Naive thymus-derived CD4-positive, alpha-beta T cell (primary cell): ENCODE measurements at regions of chr1 and their contacts with region 1.

Region 1: DNA sequence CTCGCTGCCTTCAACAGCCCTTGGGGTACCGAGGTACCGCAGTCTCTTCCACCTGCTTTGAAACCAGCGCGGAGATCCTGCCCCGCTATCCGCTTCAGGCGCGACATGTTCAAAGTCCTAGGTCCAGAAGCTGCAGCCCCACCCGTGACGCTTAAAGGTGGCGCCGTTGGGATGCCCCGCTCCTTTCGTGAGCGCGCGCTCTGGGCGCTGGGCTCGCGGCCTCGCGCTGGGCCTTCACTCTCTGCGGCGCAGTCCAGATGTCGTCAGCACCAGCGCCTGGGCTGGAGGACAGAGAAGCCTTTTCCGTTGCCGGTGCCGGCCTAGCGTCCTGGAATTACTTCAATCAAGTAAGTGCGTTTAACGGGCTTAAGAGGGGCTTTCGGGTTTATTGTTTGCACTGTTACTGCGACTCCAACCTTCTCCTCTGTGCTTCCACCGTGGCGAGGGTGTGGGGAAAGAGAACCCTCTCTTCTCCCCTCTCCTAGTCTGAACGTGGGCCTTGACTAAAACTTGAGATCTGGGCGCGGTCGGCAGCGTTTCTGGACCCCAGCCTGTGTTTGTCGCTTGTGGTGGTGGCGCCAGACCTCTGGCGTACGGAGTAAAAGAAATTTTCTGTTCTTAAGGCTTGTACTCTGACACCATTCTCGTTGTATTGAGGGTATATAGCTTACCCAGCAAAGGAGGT is at the start of gene LRRC40:
- DNase-seq: peak; percentile 92 to 98 (median 95)
- ATAC-seq: peak; percentile 99
- H3K4me3 ChIP-seq: peak within 1 kb of the TSS; percentile 85
- H3K4me3 Mint-ChIP-seq: peak within 1 kb of the TSS; percentile 87 to 99 (median 98)
- H3K27ac ChIP-seq: peak within 1 kb of the TSS; percentile 96
- H3K27ac Mint-ChIP-seq: peak within 1 kb of the TSS; percentile 95 to 100 (median 99)
- H3K4me1 ChIP-seq: peaks cover 21 to 22% of the 10 kb centered on the region in 2 donors
- H3K4me1 Mint-ChIP-seq: peaks cover 44 to 92% (median 78%) of the 10 kb centered on the region in 7 donors
- H3K27me3 ChIP-seq: no peaks in the 10 kb centered on the region
- H3K27me3 Mint-ChIP-seq: no peaks in the 10 kb centered on the region
- total RNA-seq, gene LRRC40: 10.3 to 19.2 (median 12.1) TPM

Region 2: DNA sequence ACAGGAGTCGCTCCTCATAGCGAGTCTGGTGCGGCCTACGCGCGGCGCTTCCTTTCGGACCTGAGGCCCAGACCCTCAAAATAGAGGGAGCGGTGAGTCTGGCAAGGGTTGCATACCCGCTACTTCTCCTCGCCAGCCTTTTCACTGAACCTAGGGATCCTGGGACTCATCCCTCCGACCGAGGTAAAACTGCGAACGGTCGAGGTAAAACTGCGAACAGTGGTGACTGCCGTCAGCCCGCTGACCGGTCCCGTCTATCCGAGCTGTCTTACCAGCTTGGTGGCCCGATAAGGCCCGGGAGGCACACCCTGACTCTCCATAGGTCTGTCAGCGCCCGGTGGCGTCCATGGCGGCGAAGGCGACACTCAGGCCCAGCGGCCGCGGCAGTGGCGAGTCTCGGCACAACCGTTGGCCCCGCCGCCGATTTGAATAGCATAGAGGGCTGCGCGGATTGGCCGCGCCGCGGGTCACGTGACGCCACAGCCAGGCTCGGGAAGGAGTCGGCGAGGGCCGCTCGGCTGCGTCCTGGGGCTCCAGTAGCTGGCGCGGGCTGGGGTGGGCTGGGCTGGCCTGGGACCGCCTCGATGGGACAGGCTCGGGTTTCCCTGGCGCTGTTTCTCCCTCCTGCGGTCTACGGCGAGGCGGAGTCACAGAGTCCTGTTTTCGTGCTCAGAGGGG is 1708.8 kb before region 1 on chr1 and contains the start of gene DEPDC1:
- CTCF ChIA-PET with region 1: no interaction called
- POLR2A ChIA-PET with region 1: no interaction called
- intact Hi-C with region 1: loop called in 1 of 2 experiments (anchors 10 kb)
- DNase-seq: peak; percentile 10 to 91 (median 42)
- ATAC-seq: peak; percentile 94
- H3K4me3 ChIP-seq: peak within 1 kb of the TSS; percentile 70
- H3K4me3 Mint-ChIP-seq: peak within 1 kb of the TSS; percentile 68 to 94 (median 81)
- H3K27ac ChIP-seq: no peak within 1 kb of the TSS
- H3K27ac Mint-ChIP-seq: peak within 1 kb of the TSS in 1 of 9 donors; percentile 87
- H3K4me1 ChIP-seq: peaks cover 0 to 5% of the 10 kb centered on the region in 2 donors
- H3K4me1 Mint-ChIP-seq: peaks cover 0 to 35% (median 13%) of the 10 kb centered on the region in 7 donors
- H3K27me3 ChIP-seq: no peaks in the 10 kb centered on the region
- H3K27me3 Mint-ChIP-seq: peaks cover 20 to 39% (median 25%) of the 10 kb centered on the region in 5 donors
- total RNA-seq, gene DEPDC1: 0.13 to 12.6 (median 0.24) TPM in 3 of 5 experiments, not detected in the others

Region 3: GRCh38 chr1:70134148-70134547 is 71.4 kb before region 1 on chr1:
- CTCF ChIA-PET with region 1: no interaction called
- POLR2A ChIA-PET with region 1: no interaction called
- intact Hi-C with region 1: loop called in 1 of 2 experiments (anchors 1 kb)
- DNase-seq: no peak
- ATAC-seq: no peak
- H3K4me3 ChIP-seq: no peak overlapping the region
- H3K4me3 Mint-ChIP-seq: no peak overlapping the region
- H3K27ac ChIP-seq: no peak overlapping the region
- H3K27ac Mint-ChIP-seq: no peak overlapping the region
- H3K4me1 ChIP-seq: no peaks in the 10 kb centered on the region
- H3K4me1 Mint-ChIP-seq: peaks cover 0 to 4% (median 0%) of the 10 kb centered on the region in 7 donors
- H3K27me3 ChIP-seq: no peaks in the 10 kb centered on the region
- H3K27me3 Mint-ChIP-seq: peaks cover 0 to 25% (median 9%) of the 10 kb centered on the region in 5 donors

Region 4: GRCh38 chr1:70221241-70222121 is 15.9 kb after region 1 on chr1 and contains the start of gene SRSF11:
- CTCF ChIA-PET with region 1: no interaction called
- POLR2A ChIA-PET with region 1: interaction called, 108 read pairs
- intact Hi-C with region 1: loop called (anchors 1 kb)
- DNase-seq: peak; percentile 93 to 98 (median 96)
- ATAC-seq: peak; percentile 98
- H3K4me3 ChIP-seq: peak within 1 kb of the TSS; percentile 85
- H3K4me3 Mint-ChIP-seq: peak within 1 kb of the TSS; percentile 86 to 95 (median 91)
- H3K27ac ChIP-seq: peak within 1 kb of the TSS; percentile 95
- H3K27ac Mint-ChIP-seq: peak within 1 kb of the TSS; percentile 92 to 99 (median 96)
- H3K4me1 ChIP-seq: peaks cover 22 to 32% of the 10 kb centered on the region in 2 donors
- H3K4me1 Mint-ChIP-seq: peaks cover 29 to 65% (median 54%) of the 10 kb centered on the region in 7 donors
- H3K27me3 ChIP-seq: no peaks in the 10 kb centered on the region
- H3K27me3 Mint-ChIP-seq: peaks cover 0 to 2% (median 0%) of the 10 kb centered on the region in 5 donors
- total RNA-seq, gene SRSF11: 190 to 413 (median 372) TPM

Region 5: DNA sequence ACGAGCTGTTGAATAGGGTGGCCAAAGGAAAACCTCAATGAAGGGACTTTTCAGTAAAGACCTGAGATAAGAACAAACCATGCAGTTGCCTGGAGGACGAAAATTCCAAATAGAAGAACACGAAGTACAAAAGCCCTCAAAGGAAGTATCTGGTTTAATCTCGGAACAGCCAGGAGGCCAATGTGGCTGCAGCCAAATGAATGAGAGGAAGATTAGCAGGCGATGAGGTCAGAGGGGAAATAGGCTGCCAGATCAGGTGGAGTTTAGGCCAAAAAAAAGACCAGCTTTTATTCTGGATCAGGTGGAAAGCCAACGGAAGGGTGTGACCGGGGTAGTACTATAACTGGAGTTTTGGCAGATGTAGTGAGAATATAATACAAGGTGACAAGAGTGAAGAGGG is 59.3 kb after region 1 on chr1:
- CTCF ChIA-PET with region 1: no interaction called
- POLR2A ChIA-PET with region 1: no interaction called
- intact Hi-C with region 1: no loop called
- DNase-seq: no peak
- ATAC-seq: no peak
- H3K4me3 ChIP-seq: no peak overlapping the region
- H3K4me3 Mint-ChIP-seq: no peak overlapping the region
- H3K27ac ChIP-seq: no peak overlapping the region
- H3K27ac Mint-ChIP-seq: peak overlapping the region in 6 of 9 donors; percentile 3 to 65 (median 50)
- H3K4me1 ChIP-seq: no peaks in the 10 kb centered on the region
- H3K4me1 Mint-ChIP-seq: no peaks in the 10 kb centered on the region
- H3K27me3 ChIP-seq: no peaks in the 10 kb centered on the region
- H3K27me3 Mint-ChIP-seq: no peaks in the 10 kb centered on the region

Region 6: DNA sequence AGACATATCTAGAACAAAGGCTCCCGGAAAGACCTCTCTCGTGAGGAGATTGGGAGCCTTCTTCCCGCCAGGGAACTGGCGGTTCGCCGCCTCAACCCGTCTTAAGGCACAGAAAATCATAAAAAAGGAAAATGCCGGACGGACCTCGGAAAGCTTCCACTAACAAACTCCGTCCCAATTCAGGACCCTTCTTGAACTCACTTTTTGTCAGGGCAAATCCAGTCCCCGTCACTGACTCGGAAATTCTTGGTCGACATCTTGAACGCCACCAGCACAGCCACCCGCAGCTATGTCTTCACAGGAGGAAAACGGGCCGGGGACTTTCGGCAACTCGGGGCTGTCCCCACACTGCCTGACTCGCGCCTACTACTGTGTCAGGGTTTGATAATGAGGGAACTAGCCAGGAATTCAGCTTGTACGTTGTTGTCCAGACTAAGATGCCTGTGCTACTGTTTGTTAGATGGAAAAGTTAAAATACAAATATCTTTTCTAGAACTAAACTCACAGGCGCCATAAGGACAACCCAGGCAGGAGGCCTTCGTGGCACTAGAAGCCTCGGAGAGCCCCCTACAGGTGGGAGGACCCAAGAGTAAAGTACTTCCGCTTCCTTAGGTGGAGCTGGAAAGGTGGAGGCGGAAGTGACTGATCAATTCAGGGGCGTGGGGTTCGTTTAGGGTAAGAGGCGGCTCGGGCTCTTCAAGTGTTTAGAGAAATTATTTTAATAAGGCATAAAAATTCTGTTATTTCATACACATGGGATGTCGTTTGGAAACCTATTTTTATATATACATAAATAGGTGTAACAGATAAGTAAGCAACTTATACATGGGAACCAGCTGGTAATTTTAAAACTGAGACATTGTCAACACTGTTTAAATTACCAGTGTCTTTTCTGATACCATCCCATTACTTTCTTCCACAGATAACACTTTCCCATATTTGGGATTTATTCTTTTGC is 875.4 kb after region 1 on chr1 and contains the start of gene ZRANB2:
- CTCF ChIA-PET with region 1: interaction called, 3 read pairs
- POLR2A ChIA-PET with region 1: interaction called, 23 read pairs
- intact Hi-C with region 1: loop called (anchors 1 kb)
- DNase-seq: peak; percentile 74 to 96 (median 94)
- ATAC-seq: peak; percentile 98
- H3K4me3 ChIP-seq: peak within 1 kb of the TSS; percentile 87
- H3K4me3 Mint-ChIP-seq: peak within 1 kb of the TSS; percentile 93 to 100 (median 99)
- H3K27ac ChIP-seq: peak within 1 kb of the TSS; percentile 95
- H3K27ac Mint-ChIP-seq: peak within 1 kb of the TSS; percentile 98 to 100 (median 99)
- H3K4me1 ChIP-seq: peaks cover 15 to 19% of the 10 kb centered on the region in 2 donors
- H3K4me1 Mint-ChIP-seq: peaks cover 7 to 55% (median 39%) of the 10 kb centered on the region in 7 donors
- H3K27me3 ChIP-seq: no peaks in the 10 kb centered on the region
- H3K27me3 Mint-ChIP-seq: peaks cover 12 to 28% (median 17%) of the 10 kb centered on the region in 5 donors
- total RNA-seq, gene ZRANB2: 84.9 to 167 (median 121) TPM